ENCODE measurements at regions of chr2 and their contacts with region 1.

Region 1: DNA sequence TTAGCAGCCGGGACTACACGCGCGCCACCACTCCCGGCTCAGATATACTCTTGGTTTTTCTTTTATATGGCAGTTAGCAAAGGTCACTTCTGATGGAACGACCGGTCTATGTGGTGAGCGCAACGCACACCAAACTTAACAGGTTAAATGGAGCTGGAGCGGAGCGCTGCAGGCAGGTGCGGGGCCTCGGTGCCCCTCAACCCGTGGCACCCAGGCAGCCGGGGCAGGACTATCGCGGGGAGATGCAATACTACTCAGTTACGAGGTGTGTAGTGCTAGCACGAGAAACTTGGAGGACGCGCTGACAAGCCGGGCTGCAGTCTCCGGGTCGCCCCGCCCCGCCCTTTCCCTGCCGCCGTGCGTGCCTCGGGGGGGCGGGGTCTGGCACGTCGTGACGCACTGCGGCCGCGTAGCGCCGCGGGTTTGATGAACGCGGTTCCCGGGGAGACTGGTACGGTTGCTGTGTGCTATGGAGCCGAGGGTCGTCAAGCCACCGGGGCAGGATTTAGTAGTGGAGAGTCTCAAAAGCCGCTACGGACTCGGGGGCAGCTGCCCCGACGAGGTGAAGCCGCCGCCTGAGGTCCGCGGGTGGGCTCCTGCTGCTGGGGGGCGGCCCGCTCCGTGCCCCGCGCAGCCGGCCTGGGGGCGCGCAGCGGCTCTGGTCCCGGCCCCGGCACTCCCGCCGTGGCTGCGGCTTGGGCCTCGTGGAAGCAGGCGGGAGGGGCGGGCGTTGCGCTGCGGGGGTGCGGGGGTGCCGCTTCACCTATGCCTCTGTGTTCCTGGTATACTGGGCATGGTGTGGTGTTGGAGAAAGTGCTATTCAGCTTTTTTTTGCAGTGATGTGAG is at the start of gene CCDC138:
- DNase-seq: peak; percentile 94
- H3K4me3 Mint-ChIP-seq: peak within 1 kb of the TSS; percentile 91
- H3K27ac Mint-ChIP-seq: peak within 1 kb of the TSS; percentile 81
- H3K4me1 Mint-ChIP-seq: peaks cover 13% of the 10 kb centered on the region
- H3K27me3 Mint-ChIP-seq: no peaks in the 10 kb centered on the region
- total RNA-seq, gene CCDC138: 9.1 to 9.5 TPM

Region 2: DNA sequence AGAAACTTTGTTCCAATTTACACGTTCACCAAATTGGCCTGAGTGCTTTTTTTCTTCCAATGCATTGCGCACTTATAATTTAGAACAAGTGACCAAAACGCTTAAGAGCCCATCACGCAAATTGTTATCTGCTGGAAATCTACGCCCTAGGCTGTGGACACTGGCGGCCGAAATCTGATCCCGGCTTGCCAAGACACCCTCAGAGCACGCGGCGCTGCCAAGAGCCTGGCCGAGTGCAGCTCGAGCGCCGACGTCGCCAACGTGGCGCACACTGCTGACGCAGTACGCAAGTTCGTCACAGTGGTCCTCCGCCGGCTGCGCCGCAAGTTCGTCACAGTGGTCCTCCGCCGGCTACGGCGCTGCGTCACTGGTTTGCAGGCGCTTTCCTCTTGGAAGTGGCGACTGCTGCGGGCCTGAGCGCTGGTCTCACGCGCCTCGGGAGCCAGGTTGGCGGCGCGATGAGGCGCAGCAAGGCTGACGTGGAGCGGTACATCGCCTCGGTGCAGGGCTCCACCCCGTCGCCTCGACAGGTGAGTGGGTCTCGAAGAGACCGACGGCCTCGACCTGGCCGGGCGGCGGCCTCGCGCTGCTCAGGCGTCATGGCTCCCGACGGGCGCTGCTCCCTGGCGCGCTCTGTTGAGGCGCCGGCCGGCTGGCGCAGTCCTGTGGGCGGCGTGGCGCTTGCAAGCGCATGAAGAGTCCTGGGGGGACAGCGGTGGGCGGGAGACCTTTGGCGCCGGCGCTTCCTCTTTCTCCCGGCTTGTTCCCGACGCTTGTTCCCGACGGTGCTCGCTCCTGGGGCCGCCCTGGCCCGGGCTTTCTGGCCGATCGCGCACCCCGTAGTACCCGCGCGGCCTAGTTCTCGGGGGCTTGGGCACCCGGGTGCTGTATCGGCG is 67.2 kb before region 1 on chr2 and contains the start of gene RANBP2:
- CTCF ChIA-PET with region 1: no interaction called
- POLR2A ChIA-PET with region 1: interaction called, 4 read pairs
- intact Hi-C with region 1: loop called (anchors 1 kb)
- DNase-seq: peak; percentile 96
- H3K4me3 Mint-ChIP-seq: peak within 1 kb of the TSS; percentile 93
- H3K27ac Mint-ChIP-seq: peak within 1 kb of the TSS; percentile 98
- H3K4me1 Mint-ChIP-seq: peaks cover 19% of the 10 kb centered on the region
- H3K27me3 Mint-ChIP-seq: no peaks in the 10 kb centered on the region
- total RNA-seq, gene RANBP2: 72.0 to 75.5 TPM

Region 3: GRCh38 chr2:109143214-109144187 is 356.9 kb after region 1 on chr2:
- CTCF ChIA-PET with region 1: no interaction called
- POLR2A ChIA-PET with region 1: no interaction called
- intact Hi-C with region 1: loop called (anchors 1 kb)
- DNase-seq: peak; percentile 88
- H3K4me3 Mint-ChIP-seq: peak overlapping the region; percentile 52
- H3K27ac Mint-ChIP-seq: peak overlapping the region; percentile 71
- H3K4me1 Mint-ChIP-seq: peaks cover 33% of the 10 kb centered on the region
- H3K27me3 Mint-ChIP-seq: peaks cover 62% of the 10 kb centered on the region

Region 4: DNA sequence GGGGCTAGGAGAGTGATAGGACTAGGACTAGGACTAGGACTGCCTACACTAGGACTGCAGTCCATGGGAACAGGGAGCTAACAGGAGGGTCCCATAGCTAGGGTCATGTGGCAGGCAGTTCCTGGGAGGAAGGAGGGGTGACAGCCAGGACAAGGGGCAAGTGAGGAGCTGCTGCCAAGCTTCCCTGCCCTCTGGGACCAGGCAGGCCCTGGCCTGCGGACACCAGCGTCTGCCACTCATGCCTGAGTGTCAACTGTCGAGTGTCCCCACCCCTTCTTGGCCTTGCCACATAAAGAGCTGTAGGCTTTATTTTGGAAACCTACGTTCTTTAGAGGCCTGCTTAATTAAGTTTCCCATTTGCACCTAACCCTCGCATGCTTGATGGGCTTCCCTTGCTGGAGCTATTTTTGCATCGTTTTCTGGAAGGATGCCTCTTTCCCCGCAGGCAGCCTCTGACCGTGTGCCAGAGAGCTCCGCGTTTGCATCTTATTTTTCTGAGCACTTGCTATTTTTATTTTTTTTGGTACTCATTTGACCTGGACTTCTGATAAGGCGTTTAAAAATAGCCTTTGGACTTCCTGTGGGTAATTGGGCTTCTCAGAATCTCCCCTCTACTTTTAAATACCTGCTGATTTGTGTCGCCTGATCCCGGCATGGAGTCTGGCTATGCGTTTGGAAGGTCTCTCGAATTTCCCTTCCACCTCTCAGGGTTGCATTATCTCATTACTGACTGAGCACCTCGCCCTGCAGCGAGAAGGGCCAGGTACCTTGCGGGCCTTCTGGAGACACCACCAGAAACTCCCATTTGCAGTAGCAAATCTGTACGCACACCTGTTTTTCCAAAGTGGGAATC is 408.8 kb after region 1 on chr2:
- CTCF ChIA-PET with region 1: no interaction called
- POLR2A ChIA-PET with region 1: no interaction called
- intact Hi-C with region 1: no loop called
- DNase-seq: no peak
- H3K4me3 Mint-ChIP-seq: no peak overlapping the region
- H3K27ac Mint-ChIP-seq: no peak overlapping the region
- H3K4me1 Mint-ChIP-seq: no peaks in the 10 kb centered on the region
- H3K27me3 Mint-ChIP-seq: peaks cover 12% of the 10 kb centered on the region